Panc1 (cell line): ENCODE measurements at regions of chr20 and their contacts with region 1.

Region 1: GRCh38 chr20:62252342-62252966 is 14.1 kb downstream of the OSBPL2 start:
- DNase-seq: no peak
- ATAC-seq: no peak
- H3K4me3 ChIP-seq: no peak overlapping the region
- H3K27ac ChIP-seq: no peak overlapping the region
- H3K4me1 ChIP-seq: no peaks in the 10 kb centered on the region; the same call in 1 of the 2 replicates
- H3K27me3 ChIP-seq: no peaks in the 10 kb centered on the region
- CTCF ChIP-seq: no peak

Region 2: DNA sequence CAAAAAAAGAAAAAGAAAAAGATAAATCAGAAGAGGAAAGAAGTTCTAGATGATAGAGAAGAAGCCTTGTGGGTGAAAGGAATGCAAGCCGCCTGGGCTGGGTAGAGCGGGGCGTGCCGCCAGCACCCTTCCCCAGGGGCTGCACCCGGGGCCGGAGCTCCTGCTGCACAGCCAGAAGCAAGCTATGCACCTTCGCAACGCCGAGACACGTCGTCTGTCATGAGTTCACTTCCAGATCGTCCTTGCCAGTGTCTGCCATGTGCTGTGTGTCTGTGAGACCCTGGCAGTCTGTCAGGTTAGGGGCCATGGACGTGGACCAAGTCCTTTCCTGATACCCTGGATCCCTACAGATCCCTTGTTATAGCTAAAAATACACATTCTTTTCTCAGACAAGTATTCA is 24.8 kb after region 1 on chr20:
- CTCF ChIA-PET with region 1: no interaction called
- POLR2A ChIA-PET with region 1: interaction called, 14 read pairs
- in situ Hi-C with region 1: no loop called
- intact Hi-C with region 1: no loop called
- DNase-seq: no peak
- ATAC-seq: no peak
- H3K4me3 ChIP-seq: no peak overlapping the region
- H3K27ac ChIP-seq: no peak overlapping the region
- H3K4me1 ChIP-seq: no peaks in the 10 kb centered on the region
- H3K27me3 ChIP-seq: no peaks in the 10 kb centered on the region
- CTCF ChIP-seq: no peak